Mammary epithelial cell (primary cell): ENCODE measurements at regions of chr1 and their contacts with region 1.

Region 1: DNA sequence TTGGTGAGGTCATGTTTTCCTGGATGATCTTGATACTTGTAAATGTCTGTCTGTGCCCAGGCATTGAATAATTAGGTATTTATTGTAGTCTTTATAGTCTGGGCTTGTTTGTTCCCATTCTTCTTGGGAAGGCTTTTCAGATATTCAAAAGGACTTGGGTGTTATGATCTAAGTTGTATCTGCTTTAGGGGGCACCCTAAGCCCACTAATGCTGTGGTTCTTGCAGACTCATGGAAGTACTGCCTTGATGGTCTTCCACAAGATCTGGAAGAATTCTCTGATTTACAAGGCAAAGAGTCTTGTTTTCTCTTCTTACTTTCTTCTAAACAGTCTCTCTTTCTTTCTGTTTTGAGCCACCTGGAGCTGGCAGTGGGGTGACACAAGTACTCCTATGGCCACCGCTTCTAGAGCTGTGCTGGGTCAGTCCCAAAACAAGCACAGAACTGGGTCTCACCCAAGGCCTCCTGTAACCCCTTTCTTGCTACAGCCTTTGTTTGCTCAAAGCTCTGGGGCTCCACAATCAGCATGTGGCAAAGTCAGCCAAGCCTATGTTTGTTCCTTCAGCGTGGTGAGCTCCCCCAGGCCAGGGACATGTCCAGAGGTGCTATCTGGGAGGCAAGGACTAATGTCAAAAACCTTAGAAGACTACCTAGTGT is 12.6 kb downstream of the VN1R5 start:
- DNase-seq: no peak
- H3K4me3 ChIP-seq: no peak overlapping the region
- H3K27ac ChIP-seq: no peak overlapping the region
- H3K4me1 ChIP-seq: no peaks in the 10 kb centered on the region
- H3K27me3 ChIP-seq: no peaks in the 10 kb centered on the region
- CTCF ChIP-seq: no peak

Region 2: DNA sequence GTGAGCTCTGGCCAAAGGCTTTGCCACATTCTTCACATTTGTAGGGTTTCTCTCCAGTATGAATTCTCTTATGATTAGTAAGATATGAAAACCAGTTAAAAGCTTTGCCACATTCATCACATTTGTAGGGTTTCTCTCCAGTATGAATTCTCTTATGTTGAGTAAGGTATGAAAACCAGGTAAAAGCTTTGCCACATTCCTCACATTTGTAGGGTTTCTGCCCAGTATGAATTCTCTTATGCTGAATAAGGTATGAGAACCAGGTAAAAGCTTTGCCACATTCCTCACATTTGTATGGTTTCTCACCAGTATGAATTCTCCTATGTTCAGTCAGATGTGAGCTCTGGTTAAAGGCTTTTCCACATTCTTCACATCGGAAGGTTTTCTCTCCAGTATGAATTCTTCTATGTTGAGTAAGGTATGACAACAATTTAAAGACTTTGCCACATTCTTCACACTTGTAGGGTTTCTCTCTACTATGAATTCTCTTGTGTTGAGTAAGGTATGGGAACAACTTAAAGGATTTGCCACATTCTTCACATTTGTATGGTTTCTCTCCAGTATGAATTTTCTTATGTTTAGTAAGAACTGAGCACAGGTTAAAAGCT is 281.3 kb before region 1 on chr1:
- CTCF ChIA-PET with region 1: no interaction called
- dilution Hi-C with region 1: no loop called
- in situ Hi-C with region 1: no loop called
- intact Hi-C with region 1: no loop called
- DNase-seq: no peak
- H3K4me3 ChIP-seq: no peak overlapping the region
- H3K27ac ChIP-seq: no peak overlapping the region
- H3K4me1 ChIP-seq: no peaks in the 10 kb centered on the region
- H3K27me3 ChIP-seq: no peaks in the 10 kb centered on the region
- CTCF ChIP-seq: no peak

Region 3: DNA sequence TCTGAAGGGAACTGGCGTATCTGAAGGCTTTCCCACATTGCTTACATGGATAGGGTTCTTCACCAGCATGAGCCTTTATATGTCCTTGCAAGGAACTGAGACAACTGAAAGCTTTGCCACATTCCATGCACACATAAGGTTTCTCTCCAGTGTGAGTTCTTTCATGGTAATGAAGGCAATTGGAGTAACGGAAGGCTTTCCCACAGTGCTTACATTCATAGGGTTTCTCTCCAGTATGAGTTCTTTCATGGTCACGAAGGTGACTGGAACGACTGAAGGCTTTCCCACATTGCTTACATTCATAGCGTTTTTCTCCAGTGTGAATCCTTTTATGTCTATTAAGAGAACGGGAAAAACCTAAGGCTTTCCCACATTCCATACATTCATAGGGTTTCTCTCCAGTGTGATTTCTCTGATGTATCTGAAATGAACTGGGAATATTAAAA is 111.7 kb before region 1 on chr1:
- CTCF ChIA-PET with region 1: no interaction called
- dilution Hi-C with region 1: no loop called
- in situ Hi-C with region 1: no loop called
- intact Hi-C with region 1: no loop called
- DNase-seq: no peak
- H3K4me3 ChIP-seq: no peak overlapping the region
- H3K27ac ChIP-seq: no peak overlapping the region
- H3K4me1 ChIP-seq: no peaks in the 10 kb centered on the region
- H3K27me3 ChIP-seq: no peaks in the 10 kb centered on the region
- CTCF ChIP-seq: no peak

Region 4: DNA sequence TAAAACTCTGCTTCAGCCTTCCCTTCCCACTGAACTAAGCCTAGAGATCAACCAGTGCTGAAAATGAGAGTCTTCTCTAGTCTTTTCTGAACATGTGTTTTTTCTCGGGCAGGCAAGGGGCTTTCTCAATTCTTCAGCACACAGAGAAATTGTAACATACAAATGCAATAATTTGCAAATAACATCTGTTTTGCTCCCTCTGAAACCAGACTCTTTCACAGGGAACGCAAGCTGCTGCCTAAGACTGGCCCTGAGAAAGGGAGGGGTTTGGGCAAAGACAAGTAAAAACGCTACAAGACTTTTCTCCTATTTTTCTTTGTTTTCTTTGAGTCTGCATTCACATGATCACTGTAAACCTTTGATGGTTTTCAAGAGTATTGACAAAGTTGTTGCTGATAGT is 52.3 kb before region 1 on chr1:
- CTCF ChIA-PET with region 1: no interaction called
- dilution Hi-C with region 1: no loop called
- in situ Hi-C with region 1: no loop called
- intact Hi-C with region 1: no loop called
- DNase-seq: no peak
- H3K4me3 ChIP-seq: no peak overlapping the region
- H3K27ac ChIP-seq: no peak overlapping the region
- H3K4me1 ChIP-seq: no peaks in the 10 kb centered on the region
- H3K27me3 ChIP-seq: peaks cover 3% of the 10 kb centered on the region
- CTCF ChIP-seq: no peak

Region 5: GRCh38 chr1:247295274-247295684 is 26.8 kb after region 1 on chr1:
- CTCF ChIA-PET with region 1: no interaction called
- dilution Hi-C with region 1: loop called (anchors 5 kb)
- in situ Hi-C with region 1: no loop called
- intact Hi-C with region 1: no loop called
- DNase-seq: no peak
- H3K4me3 ChIP-seq: no peak overlapping the region
- H3K27ac ChIP-seq: no peak overlapping the region
- H3K4me1 ChIP-seq: no peaks in the 10 kb centered on the region
- H3K27me3 ChIP-seq: no peaks in the 10 kb centered on the region
- CTCF ChIP-seq: no peak